HCT116 (cell line): ENCODE measurements at regions of chr15 and their contacts with region 1.

Region 1: DNA sequence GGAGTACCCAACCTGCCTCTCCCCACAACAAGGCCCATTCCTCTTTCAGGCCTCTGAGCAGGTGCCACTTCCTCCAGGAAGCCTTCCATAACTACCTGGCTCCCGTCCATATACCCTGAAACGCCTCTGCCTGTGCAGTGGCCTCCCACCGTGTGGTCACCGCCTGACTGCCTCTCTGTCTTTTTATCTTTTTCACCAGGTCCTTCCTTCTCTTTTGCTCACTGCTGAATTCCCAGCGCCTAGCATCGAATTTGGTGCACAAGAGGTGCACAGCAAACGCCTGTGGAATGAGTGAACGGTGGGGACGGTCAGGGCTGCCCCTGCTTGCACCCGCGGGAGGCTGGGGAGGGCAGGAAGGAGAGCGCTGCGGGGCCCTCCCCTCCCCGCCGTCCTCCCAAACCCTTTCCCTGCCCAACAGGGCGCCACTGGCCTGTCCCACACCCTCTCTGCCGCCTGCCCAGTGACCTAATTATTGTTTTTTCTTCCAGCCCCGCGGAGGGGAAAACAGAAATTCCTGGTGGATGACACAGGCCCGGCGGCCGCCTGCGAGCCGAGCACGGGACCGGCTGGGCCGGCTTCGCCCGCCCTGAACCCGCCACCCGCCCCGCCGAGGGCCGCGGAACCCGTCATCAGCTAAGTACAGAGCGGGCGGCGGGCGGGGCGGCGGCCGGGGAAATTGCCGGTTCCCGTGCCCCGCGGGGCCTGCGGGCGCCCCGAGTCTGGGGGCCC is 140.1 kb downstream of the SMAD6 start:
- DNase-seq: peak; percentile 47
- ATAC-seq: peak; percentile 87
- H3K4me3 ChIP-seq: peak overlapping the region; percentile 40 to 57
- H3K27ac ChIP-seq: peak overlapping the region; percentile 88
- H3K4me1 ChIP-seq: peaks cover 33 to 36% of the 10 kb centered on the region in 2 experiments
- H3K27me3 ChIP-seq: no peaks in the 10 kb centered on the region
- CTCF ChIP-seq: no peak
- POLR2A ChIP-seq: no peak
- RAD21 ChIP-seq: no peak

Region 2: DNA sequence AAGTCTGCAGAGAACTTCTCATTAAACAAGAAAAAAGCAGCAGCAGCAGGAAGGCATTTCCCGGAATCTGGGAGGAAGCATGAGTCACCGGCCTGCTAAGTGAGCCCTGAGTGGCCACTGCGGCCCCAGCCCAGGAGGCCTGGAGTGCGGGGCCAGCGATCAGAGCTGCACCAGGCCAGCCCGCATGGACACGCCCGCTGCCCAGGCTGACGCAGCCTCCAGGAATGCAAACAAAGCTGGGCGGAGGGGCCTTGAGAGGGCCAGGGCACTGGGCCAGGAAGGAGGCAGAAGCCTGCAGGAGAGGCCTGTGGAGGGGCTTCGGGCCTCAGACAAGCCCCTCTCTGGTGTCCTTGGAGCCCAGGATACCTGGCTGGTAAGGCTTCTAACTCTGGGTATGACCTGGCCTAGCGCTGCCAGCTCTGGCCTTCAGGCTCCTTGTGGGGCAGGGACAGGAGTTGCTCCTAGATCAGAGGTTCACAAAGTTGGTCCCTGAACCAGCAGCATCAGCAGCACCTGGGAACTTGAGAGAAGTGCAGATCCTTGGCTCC is 38.9 kb before region 1 on chr15:
- CTCF ChIA-PET with region 1: no interaction called
- POLR2A ChIA-PET with region 1: no interaction called
- RAD21 ChIA-PET with region 1: no interaction called
- intact Hi-C with region 1: loop called (anchors 5 kb)
- DNase-seq: peak; percentile 86
- ATAC-seq: peak; percentile 97
- H3K4me3 ChIP-seq: peak overlapping the region in 1 of 2 experiments; percentile 44; a peak in 2 of 4 replicates
- H3K27ac ChIP-seq: peak overlapping the region; percentile 65
- H3K4me1 ChIP-seq: peaks cover 40 to 46% of the 10 kb centered on the region in 2 experiments
- H3K27me3 ChIP-seq: no peaks in the 10 kb centered on the region
- CTCF ChIP-seq: no peak
- POLR2A ChIP-seq: no peak
- RAD21 ChIP-seq: no peak

Region 3: DNA sequence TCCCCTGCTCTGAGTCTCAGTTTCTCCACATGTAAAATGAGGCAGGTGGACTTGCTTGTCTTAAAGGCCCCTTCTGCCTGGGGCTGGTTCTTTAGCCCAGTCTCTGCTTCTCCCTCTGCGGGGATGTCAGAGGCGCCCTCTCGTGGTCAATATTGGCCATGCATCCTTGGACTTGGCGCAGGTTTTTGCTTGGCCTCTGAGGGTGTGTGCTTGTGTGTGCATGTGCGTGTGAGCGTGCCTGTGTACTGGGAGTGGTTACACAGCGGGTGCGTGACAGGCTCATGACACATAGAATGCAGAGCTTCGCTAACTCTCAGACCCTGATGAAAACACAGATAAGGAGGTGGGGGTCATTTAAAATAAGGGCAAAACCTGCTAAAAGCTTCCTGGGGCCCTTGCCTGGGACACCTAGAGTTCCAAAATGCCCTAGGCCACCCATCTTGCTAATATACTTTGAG is 20.8 kb after region 1 on chr15:
- CTCF ChIA-PET with region 1: no interaction called
- POLR2A ChIA-PET with region 1: no interaction called
- RAD21 ChIA-PET with region 1: no interaction called
- intact Hi-C with region 1: no loop called
- DNase-seq: peak; percentile 71
- ATAC-seq: peak; percentile 94
- H3K4me3 ChIP-seq: no peak overlapping the region
- H3K27ac ChIP-seq: no peak overlapping the region
- H3K4me1 ChIP-seq: peaks cover 0 to 22% of the 10 kb centered on the region in 2 experiments; a peak in 3 of 4 replicates
- H3K27me3 ChIP-seq: no peaks in the 10 kb centered on the region
- CTCF ChIP-seq: peak; percentile 92 to 96 (median 95)
- POLR2A ChIP-seq: no peak
- RAD21 ChIP-seq: peak; percentile 78